T-cell (primary cell): ENCODE measurements at regions of chr6 and their contacts with region 1.

Region 1: GRCh38 chr6:149347067-149347466 is 29.6 kb downstream of the TAB2 start:
- DNase-seq: no peak
- ATAC-seq: no peak
- H3K4me3 ChIP-seq: no peak overlapping the region
- H3K4me3 Mint-ChIP-seq: no peak overlapping the region
- H3K27ac ChIP-seq: no peak overlapping the region
- H3K27ac Mint-ChIP-seq: no peak overlapping the region
- H3K4me1 ChIP-seq: peaks cover 17 to 25% of the 10 kb centered on the region in 2 experiments
- H3K4me1 Mint-ChIP-seq: peaks cover 74 to 82% (median 82%) of the 10 kb centered on the region in 3 donors
- H3K27me3 ChIP-seq: no peaks in the 10 kb centered on the region
- H3K27me3 Mint-ChIP-seq: no peaks in the 10 kb centered on the region

Region 2: GRCh38 chr6:148557796-148558321 is 789.2 kb before region 1 on chr6:
- CTCF ChIA-PET with region 1: no interaction called
- POLR2A ChIA-PET with region 1: no interaction called
- DNase-seq: peak in 3 of 35 experiments; percentile 5 to 18 (median 15)
- ATAC-seq: peak in 2 of 4 experiments; percentile 28 to 46
- H3K4me3 ChIP-seq: no peak overlapping the region
- H3K4me3 Mint-ChIP-seq: peak overlapping the region in 1 of 3 donors; percentile 16
- H3K27ac ChIP-seq: no peak overlapping the region
- H3K27ac Mint-ChIP-seq: no peak overlapping the region
- H3K4me1 ChIP-seq: peaks cover 0 to 13% of the 10 kb centered on the region in 2 experiments
- H3K4me1 Mint-ChIP-seq: peaks cover 8 to 11% (median 8%) of the 10 kb centered on the region in 3 donors
- H3K27me3 ChIP-seq: peaks cover 2 to 25% of the 10 kb centered on the region in 2 experiments
- H3K27me3 Mint-ChIP-seq: peaks cover 29% of the 10 kb centered on the region in 2 donors

Region 3: DNA sequence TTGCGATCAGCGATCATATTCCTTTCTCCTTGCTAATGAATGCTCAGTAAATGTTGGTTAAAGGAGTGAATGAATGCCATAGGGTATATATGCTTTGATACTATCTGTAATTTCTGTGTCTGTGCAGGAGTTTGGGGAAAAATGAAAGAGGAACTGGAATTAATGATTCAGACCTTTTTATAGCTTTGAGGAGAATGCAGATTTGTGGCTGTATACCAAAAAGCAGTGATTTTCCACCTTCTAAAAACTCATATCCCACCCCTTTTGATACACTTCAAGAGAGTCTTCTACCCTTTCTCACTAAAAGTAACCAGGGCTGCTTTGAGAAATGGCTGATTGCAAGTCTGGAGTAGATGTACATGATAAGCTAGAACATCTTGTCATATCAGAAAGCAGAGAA is 26.4 kb after region 1 on chr6:
- CTCF ChIA-PET with region 1: no interaction called
- POLR2A ChIA-PET with region 1: interaction called, 4 to 19 read pairs
- DNase-seq: no peak
- ATAC-seq: no peak
- H3K4me3 ChIP-seq: no peak overlapping the region
- H3K4me3 Mint-ChIP-seq: peak overlapping the region in 1 of 3 donors; percentile 24
- H3K27ac ChIP-seq: no peak overlapping the region
- H3K27ac Mint-ChIP-seq: peak overlapping the region; percentile 44 to 62
- H3K4me1 ChIP-seq: peaks cover 8 to 32% of the 10 kb centered on the region in 2 experiments
- H3K4me1 Mint-ChIP-seq: peaks cover 60 to 70% (median 62%) of the 10 kb centered on the region in 3 donors
- H3K27me3 ChIP-seq: no peaks in the 10 kb centered on the region
- H3K27me3 Mint-ChIP-seq: no peaks in the 10 kb centered on the region

Region 4: DNA sequence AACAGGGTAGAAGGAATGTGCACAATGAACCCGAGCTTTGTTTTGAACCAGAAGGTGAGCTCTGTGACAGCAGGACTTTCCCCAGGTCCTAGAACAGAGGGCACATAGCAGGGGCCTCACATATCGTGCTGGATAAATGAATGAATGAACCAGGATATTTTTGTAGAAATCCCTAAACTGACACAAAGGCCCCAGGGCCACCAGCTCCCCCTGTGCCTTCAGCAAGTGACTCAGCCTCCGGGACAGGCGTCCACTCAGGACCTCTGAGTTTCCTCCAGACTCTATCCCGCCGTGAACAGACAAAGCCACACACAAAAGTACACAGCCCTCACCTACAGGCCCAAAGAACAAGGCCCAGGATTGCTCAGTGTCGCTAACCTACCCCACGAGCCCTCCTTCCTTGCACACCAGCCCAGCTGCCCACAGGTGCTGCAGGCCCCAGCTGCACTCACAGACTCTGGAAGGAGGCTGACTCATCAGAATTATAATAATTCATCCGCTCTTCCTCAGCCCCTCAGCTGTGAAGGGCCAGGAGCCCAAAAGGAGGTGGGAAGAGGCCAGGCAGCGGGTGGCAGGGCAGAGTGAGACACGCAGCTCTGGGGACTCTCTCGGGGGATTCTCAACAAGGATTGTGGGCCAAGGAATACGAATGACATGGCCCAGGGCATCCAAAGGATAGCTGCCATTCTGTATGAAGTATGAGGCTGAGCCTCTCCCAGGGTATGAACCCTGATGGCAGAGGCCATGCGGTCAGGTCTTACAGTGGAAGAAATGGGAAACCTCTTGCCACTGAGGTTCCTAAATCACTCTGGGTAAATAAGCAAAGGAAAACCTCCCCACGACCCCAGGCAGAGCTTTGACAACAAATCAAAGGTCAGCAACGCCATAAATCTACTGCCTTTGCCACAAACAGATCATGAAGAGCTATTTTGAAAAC is 93.9 kb after region 1 on chr6:
- CTCF ChIA-PET with region 1: interaction called in 1 of 2 experiments, 13 read pairs
- POLR2A ChIA-PET with region 1: no interaction called
- DNase-seq: no peak
- ATAC-seq: no peak
- H3K4me3 ChIP-seq: no peak overlapping the region
- H3K4me3 Mint-ChIP-seq: no peak overlapping the region
- H3K27ac ChIP-seq: no peak overlapping the region
- H3K27ac Mint-ChIP-seq: no peak overlapping the region
- H3K4me1 ChIP-seq: no peaks in the 10 kb centered on the region
- H3K4me1 Mint-ChIP-seq: peaks cover 7 to 21% (median 15%) of the 10 kb centered on the region in 3 donors
- H3K27me3 ChIP-seq: no peaks in the 10 kb centered on the region
- H3K27me3 Mint-ChIP-seq: no peaks in the 10 kb centered on the region